ENCODE measurements at regions of chr17 and their contacts with region 1.

Region 1: GRCh38 chr17:20009302-20010098 is at the start of gene SPECC1:
- DNase-seq: peak; percentile 86
- H3K4me3 ChIP-seq: peak within 1 kb of the TSS; percentile 42 to 69 (median 51)
- H3K27ac ChIP-seq: peak within 1 kb of the TSS; percentile 47 to 63 (median 52)
- H3K4me1 ChIP-seq: peaks cover 0 to 19% (median 14%) of the 10 kb centered on the region in 4 donors
- H3K27me3 ChIP-seq: peaks cover 95% of the 10 kb centered on the region
- CTCF ChIP-seq: peak in 2 of 5 experiments; percentile 96 to 99
- EP300 ChIP-seq: no peak
- POLR2A ChIP-seq: no peak
- total RNA-seq, gene SPECC1: 117 to 141 (median 125) TPM

Region 2: DNA sequence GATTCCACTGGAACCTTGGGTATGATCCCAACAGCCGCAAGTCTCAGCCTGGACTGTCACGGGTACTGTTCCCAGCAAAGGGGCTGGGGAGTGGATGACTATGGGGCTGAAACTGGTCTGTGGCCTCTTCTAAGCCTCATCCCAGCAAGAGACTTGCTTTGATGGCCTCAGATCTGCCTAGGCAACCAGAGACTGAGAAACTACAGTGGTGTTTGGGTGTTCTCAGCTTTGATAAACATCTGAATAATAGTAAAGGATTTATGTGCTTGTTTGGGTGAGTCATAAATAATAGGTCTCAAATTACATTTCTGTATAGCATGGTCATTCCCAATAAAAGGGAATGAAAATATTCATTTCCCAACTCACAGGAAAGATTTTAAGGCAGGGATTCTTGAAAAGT is 111.6 kb before region 1 on chr17:
- in situ Hi-C with region 1: no loop called
- intact Hi-C with region 1: no loop called
- DNase-seq: no peak
- H3K4me3 ChIP-seq: no peak overlapping the region
- H3K27ac ChIP-seq: peak overlapping the region in 2 of 4 donors; percentile 6 to 38
- H3K4me1 ChIP-seq: peaks cover 0 to 15% (median 8%) of the 10 kb centered on the region in 4 donors
- H3K27me3 ChIP-seq: no peaks in the 10 kb centered on the region
- CTCF ChIP-seq: no peak
- EP300 ChIP-seq: no peak
- POLR2A ChIP-seq: no peak

Region 3: GRCh38 chr17:19958023-19958422 is 51.5 kb before region 1 on chr17:
- in situ Hi-C with region 1: no loop called
- intact Hi-C with region 1: no loop called
- DNase-seq: no peak
- H3K4me3 ChIP-seq: no peak overlapping the region
- H3K27ac ChIP-seq: no peak overlapping the region
- H3K4me1 ChIP-seq: peaks cover 0 to 12% (median 3%) of the 10 kb centered on the region in 4 donors
- H3K27me3 ChIP-seq: no peaks in the 10 kb centered on the region
- CTCF ChIP-seq: no peak
- EP300 ChIP-seq: no peak
- POLR2A ChIP-seq: no peak

Region 4: GRCh38 chr17:20103454-20104446 is 94.2 kb after region 1 on chr17:
- in situ Hi-C with region 1: loop called in 1 of 4 experiments (anchors 10 kb)
- intact Hi-C with region 1: no loop called
- DNase-seq: no peak
- H3K4me3 ChIP-seq: no peak overlapping the region
- H3K27ac ChIP-seq: no peak overlapping the region
- H3K4me1 ChIP-seq: no peaks in the 10 kb centered on the region
- H3K27me3 ChIP-seq: peaks cover 8% of the 10 kb centered on the region
- CTCF ChIP-seq: no peak
- EP300 ChIP-seq: no peak
- POLR2A ChIP-seq: no peak

Region 5: DNA sequence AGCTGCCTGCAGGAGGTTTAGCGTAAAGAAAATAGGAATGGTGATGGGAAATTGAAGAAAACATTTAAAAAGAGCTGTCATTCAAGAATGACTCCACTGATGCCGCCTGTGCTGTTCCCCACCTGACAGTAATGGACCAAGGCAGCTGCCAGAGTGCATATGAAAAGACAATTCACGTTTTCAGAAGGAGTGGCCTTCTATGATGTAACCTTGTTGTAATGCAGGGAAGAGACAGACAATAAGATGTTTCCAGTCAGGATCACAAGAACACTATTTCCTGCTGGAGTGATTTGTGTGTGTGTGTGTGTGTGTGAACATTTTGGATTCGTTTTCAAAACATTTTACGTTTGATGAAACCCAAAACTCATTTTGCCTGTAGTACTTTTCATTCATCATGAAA is 254.1 kb after region 1 on chr17:
- in situ Hi-C with region 1: no loop called
- intact Hi-C with region 1: no loop called
- DNase-seq: no peak
- H3K4me3 ChIP-seq: no peak overlapping the region
- H3K27ac ChIP-seq: peak overlapping the region in 1 of 4 donors; percentile 31
- H3K4me1 ChIP-seq: no peaks in the 10 kb centered on the region
- H3K27me3 ChIP-seq: no peaks in the 10 kb centered on the region
- CTCF ChIP-seq: no peak
- EP300 ChIP-seq: no peak
- POLR2A ChIP-seq: no peak

Measured in transverse colon (tissue), 4 donors.